AG04450 (cell line): ENCODE measurements at regions of chr9 and their contacts with region 1.

Region 1: DNA sequence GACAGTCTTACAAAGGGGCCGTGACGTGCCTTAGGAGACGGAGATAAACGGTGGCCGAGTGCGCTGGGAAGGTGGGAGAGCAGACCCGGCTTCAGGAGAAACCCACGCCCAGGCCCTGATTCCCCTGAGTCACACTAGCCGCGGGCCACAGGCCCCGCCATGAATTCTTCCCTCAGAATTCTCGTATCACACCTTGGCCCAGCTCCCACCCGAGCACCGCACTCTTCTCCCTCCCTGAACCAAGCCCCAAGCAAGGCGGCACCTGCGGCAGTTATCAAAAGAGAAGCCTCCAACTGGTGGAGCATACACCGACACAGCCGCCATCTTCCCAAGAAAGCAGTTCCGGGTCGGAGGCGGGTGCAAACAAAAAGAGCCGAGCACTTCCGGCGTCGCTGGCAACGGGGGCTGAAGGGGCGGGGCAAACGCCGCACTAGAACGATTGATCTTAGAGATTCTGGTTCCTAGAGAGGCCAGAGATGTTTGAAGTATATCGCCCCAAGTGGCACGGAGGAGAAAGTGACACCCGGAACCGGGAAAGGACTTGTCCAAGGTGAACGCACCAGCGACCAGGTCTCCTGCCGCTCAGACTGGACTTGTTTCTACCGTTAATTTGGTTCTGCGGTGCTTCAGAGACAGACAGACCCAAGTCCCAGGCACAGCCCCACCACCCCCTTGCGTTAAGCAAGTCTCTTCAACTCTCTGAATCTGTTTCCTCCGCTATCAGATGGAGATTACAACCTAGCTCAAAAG is at the start of gene PSMB7:
- DNase-seq: peak; percentile 91
- H3K4me3 ChIP-seq: peak within 1 kb of the TSS; percentile 97
- H3K27ac ChIP-seq: peak within 1 kb of the TSS; percentile 69
- H3K27me3 ChIP-seq: no peaks in the 10 kb centered on the region
- CTCF ChIP-seq: peak; percentile 83
- polyA plus RNA-seq, gene PSMB7: 382 and 396 TPM in 2 replicates

Region 2: GRCh38 chr9:123863164-123863855 is 552.0 kb before region 1 on chr9:
- CTCF ChIA-PET with region 1: no interaction called
- POLR2A ChIA-PET with region 1: no interaction called
- DNase-seq: no peak
- H3K4me3 ChIP-seq: no peak overlapping the region
- H3K27ac ChIP-seq: no peak overlapping the region
- H3K27me3 ChIP-seq: no peaks in the 10 kb centered on the region
- CTCF ChIP-seq: no peak

Region 3: DNA sequence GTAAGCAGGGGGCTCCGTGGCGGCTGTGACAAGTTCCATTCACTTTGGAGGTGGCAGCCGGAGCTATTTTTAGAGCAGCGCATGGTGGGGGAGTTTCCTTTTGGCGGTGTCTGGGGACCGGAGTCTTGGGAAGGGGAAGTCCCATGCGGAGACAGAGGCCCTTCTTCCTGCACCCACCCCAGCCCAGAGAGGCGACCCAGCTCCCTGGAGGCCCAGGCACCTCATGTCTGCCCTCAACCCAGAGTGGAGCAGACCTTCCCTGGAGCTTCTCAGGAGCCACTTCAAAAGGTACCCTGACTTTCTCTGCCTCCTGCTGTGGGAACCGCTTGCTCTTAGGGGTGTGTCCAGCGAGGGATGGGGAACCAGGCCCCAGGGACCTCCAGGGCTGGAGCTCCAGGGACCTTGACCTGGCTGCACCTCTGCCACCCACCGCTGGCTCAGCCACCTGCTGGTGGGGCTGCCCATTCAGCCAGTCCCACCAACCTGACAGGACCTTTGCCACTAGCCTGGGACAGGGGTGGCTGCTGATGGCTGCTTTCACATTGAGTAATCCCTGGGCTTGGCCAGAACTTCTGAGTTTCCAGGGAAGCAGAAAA is 123.4 kb before region 1 on chr9:
- CTCF ChIA-PET with region 1: no interaction called
- POLR2A ChIA-PET with region 1: no interaction called
- DNase-seq: no peak
- H3K4me3 ChIP-seq: no peak overlapping the region
- H3K27ac ChIP-seq: peak overlapping the region; percentile 57
- H3K27me3 ChIP-seq: no peaks in the 10 kb centered on the region
- CTCF ChIP-seq: no peak

Region 4: GRCh38 chr9:124392871-124393460 is 22.3 kb before region 1 on chr9:
- CTCF ChIA-PET with region 1: interaction called, 119 read pairs
- POLR2A ChIA-PET with region 1: interaction called, 11 read pairs
- DNase-seq: peak; percentile 65
- H3K4me3 ChIP-seq: no peak overlapping the region
- H3K27ac ChIP-seq: peak overlapping the region; percentile 43
- H3K27me3 ChIP-seq: no peaks in the 10 kb centered on the region
- CTCF ChIP-seq: peak; percentile 61

Region 5: GRCh38 chr9:124399323-124399967 is 15.8 kb before region 1 on chr9:
- CTCF ChIA-PET with region 1: interaction called, 119 read pairs
- POLR2A ChIA-PET with region 1: interaction called, 11 read pairs
- DNase-seq: no peak
- H3K4me3 ChIP-seq: peak overlapping the region; percentile 17
- H3K27ac ChIP-seq: peak overlapping the region; percentile 57
- H3K27me3 ChIP-seq: no peaks in the 10 kb centered on the region
- CTCF ChIP-seq: peak; percentile 42

Region 6: GRCh38 chr9:124450241-124450924 is 35.1 kb after region 1 on chr9 and contains the start of gene ADGRD2:
- CTCF ChIA-PET with region 1: no interaction called
- POLR2A ChIA-PET with region 1: no interaction called
- DNase-seq: no peak
- H3K4me3 ChIP-seq: peak within 1 kb of the TSS; percentile 25
- H3K27ac ChIP-seq: no peak within 1 kb of the TSS
- H3K27me3 ChIP-seq: peaks cover 46% of the 10 kb centered on the region
- CTCF ChIP-seq: no peak
- polyA plus RNA-seq, gene ADGRD2: not detected in 2 replicates

Region 7: DNA sequence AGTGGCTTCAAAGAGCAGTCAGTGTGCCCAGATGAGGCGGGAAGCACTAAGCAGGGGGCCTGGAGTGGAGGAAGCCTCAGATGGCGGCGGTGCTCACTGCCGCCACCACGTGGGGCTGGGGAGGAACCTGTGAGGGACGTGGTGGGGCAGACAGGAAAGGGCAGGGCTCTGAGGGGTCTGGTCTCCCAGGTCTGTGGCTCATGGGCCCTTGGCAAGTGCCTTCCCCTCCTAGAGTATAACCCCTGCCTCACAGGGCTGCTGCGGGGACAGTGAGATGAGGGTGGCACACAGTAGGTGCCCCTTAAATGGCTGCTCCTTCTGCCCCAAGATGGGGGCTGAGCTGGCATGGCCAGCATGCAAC is 65.3 kb after region 1 on chr9:
- CTCF ChIA-PET with region 1: no interaction called
- POLR2A ChIA-PET with region 1: no interaction called
- DNase-seq: no peak
- H3K4me3 ChIP-seq: no peak overlapping the region
- H3K27ac ChIP-seq: no peak overlapping the region
- H3K27me3 ChIP-seq: peaks cover 71% of the 10 kb centered on the region
- CTCF ChIP-seq: peak; percentile 51

Region 8: DNA sequence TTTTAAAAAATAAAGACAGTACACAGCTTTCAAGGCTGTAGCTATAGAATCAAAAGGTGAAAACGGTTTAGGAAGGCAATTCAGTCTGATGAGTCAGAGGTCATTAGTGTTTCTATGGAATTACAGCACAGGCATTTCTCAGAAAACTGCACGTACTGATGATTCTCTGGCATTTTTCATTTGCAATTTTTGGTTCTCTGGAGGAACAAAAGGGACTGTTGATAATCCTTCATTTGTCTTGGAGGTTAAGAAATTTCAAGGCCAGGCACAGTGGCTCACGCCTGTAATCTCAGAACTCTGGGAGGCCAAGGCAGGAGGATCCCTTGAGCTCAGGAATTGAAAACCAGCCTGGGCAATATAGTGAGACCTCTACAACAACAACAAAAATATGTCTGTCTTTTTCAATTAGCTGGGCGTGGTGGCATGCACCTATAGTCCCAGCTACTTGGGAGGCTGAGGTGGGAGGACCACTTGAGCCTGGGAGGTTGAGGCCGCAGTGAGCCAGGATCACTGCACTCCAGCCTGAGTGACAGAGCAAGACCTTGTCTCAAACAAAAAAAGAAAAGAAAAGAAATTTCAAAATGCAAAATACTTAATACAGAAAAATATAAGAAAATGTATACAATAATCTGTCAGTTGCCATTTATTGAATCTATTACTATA is 328.5 kb after region 1 on chr9:
- CTCF ChIA-PET with region 1: interaction called, 10 read pairs
- POLR2A ChIA-PET with region 1: no interaction called
- DNase-seq: no peak
- H3K4me3 ChIP-seq: no peak overlapping the region
- H3K27ac ChIP-seq: peak overlapping the region; percentile 12
- H3K27me3 ChIP-seq: no peaks in the 10 kb centered on the region
- CTCF ChIP-seq: no peak